ENCODE measurements at regions of chr7 and their contacts with region 1.

Region 1: DNA sequence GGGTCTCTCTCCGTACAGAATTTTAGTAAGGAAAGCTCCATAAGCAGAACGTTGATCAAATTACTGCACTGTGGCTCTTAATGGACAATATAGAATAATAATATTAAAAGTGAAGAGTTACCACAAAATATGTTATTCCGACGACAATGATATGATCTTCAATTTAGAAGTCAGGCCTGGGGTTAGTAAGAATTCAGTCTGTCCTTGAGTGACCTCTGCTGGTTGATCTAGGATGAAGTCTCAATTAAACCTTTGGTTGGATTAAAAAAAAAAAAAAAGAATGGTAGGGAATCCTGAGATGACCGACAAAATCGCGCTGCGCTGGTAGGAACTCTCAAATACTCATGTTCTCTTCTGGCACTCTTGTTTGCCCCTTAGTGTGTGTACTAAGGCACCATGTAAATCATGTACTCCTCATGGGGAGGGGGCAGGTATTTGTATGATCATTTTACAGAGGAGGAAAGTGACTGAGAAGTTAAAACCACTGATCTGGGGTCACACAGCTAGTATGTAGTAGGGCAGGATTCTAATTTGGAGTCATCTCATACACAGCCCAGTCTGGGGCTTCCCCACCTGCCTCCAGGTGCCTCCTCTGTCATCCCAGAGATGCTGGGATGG is 161.3 kb upstream of the NPVF start:
- DNase-seq: no peak
- H3K4me3 ChIP-seq: no peak overlapping the region
- H3K27ac ChIP-seq: no peak overlapping the region
- H3K27me3 ChIP-seq: peaks cover 12% of the 10 kb centered on the region
- CTCF ChIP-seq: peak; percentile 60

Region 2: GRCh38 chr7:25259587-25260243 is 129.9 kb before region 1 on chr7:
- CTCF ChIA-PET with region 1: interaction called, 234 read pairs
- POLR2A ChIA-PET with region 1: no interaction called
- DNase-seq: peak; percentile 53
- H3K4me3 ChIP-seq: no peak overlapping the region
- H3K27ac ChIP-seq: no peak overlapping the region
- H3K27me3 ChIP-seq: peaks cover 8% of the 10 kb centered on the region
- CTCF ChIP-seq: peak; percentile 91

Region 3: DNA sequence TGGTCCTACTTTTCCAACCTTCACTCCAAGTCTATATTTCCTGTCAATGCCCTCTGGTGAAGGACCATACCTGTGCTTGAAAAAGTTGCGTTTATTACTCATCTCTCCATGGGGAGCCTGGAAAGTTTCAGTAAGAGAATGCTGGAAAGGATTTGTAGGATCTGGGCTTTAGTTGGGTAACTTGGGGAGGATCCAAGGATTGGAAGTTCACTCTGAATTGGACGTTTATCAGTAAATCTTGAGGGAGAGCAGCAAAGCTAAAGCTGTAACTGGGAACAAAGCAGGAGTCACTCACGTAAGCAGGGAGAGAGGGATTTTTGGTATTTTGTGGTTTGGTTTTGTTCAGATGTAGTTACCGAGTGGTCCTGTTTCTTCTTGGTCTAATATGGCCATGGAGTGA is 109.9 kb before region 1 on chr7:
- CTCF ChIA-PET with region 1: no interaction called
- POLR2A ChIA-PET with region 1: no interaction called
- DNase-seq: no peak
- H3K4me3 ChIP-seq: no peak overlapping the region
- H3K27ac ChIP-seq: no peak overlapping the region
- H3K27me3 ChIP-seq: peaks cover 3% of the 10 kb centered on the region
- CTCF ChIP-seq: no peak

Region 4: DNA sequence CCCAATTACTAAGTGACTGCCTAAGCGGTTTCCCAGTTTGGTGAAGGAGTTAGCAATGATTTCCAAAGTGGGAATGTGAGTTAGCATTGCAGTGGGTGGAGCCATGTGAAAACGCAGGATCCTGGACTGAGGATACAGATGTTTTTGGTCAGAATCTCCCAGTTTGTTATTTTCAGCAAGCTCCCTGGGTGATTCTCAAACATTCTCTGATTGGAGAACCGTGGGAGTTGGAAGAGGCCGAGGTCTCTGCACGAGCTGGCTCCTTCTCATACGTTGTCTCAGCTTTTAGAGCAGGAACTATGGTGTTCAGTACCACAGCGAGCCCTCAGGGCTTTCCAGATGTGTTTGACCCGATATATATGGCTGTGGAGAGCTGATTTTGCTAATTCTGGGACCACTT is 235.2 kb after region 1 on chr7:
- CTCF ChIA-PET with region 1: no interaction called
- POLR2A ChIA-PET with region 1: no interaction called
- DNase-seq: no peak
- H3K4me3 ChIP-seq: no peak overlapping the region
- H3K27ac ChIP-seq: no peak overlapping the region
- H3K27me3 ChIP-seq: no peaks in the 10 kb centered on the region
- CTCF ChIP-seq: no peak

Region 5: DNA sequence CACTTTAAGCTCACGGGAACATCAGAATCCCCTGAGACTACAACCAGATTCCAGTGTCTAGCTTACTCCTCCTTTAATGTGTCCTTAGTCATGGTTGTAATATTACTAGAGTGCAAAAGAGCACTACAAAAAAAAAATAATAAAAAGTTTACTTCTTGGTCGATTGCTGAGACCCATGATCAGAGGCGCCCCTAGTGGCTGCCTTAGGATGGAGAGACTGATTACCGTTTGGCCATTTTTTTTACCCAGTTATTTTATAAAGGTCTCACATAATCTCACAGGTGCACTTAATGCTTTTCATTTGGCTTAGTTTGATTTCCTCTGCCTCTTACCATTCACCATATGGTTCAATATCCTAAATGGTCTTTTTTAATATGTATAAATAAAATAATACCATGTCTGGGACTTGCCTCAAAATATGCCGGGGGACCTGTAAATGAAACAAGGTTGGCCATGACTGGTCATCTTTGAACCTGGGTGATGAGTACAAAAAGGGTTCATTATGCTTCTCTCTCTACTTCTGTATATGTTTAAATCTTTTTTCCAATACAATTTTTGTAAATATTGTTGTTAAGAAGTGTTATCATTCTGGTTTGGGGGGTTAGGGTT is 430.9 kb after region 1 on chr7:
- CTCF ChIA-PET with region 1: no interaction called
- POLR2A ChIA-PET with region 1: no interaction called
- DNase-seq: no peak
- H3K4me3 ChIP-seq: no peak overlapping the region
- H3K27ac ChIP-seq: no peak overlapping the region
- H3K27me3 ChIP-seq: peaks cover 4% of the 10 kb centered on the region
- CTCF ChIP-seq: peak; percentile 49